CD4-positive, alpha-beta memory T cell (primary cell): ENCODE measurements at regions of chr5 and their contacts with region 1.

Region 1: DNA sequence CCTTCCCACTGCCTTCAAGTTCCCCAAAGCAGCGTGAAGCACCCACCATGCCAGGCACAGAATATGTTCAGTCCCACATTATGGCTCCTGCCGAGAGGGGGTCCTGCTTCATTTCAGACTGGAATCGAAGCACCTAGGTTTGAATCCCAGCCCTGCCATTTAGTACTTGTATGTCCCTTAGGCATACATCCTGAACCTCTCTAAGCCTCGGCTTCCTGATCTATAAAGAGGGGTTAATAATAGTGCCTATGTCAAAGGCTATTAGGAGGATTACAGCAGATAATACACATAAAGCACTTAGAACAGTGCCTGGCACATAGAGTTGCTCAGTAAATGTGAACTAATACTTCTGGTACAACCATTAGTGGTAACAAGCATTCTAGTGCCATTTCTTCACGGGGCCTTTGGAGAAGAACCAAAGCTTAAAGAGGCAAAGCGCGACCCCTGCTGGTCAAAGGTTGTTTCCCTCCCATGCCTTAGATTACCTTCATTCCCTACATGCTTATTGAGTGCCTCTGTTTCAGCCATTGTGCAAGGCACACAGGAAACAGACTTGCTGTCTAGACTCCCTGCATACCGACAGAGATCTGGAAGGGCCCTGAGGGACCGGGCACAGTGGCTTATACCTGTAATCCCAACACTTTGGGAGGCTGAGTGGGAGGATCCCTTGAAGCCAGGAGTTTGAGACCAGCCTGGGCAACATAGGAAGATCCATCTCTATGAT is 98.2 kb downstream of the PPARGC1B start:
- DNase-seq: peak; percentile 65 to 73 (median 67)
- H3K4me3 ChIP-seq: no peak overlapping the region
- H3K4me3 Mint-ChIP-seq: no peak overlapping the region
- H3K27ac ChIP-seq: no peak overlapping the region
- H3K27ac Mint-ChIP-seq: peak overlapping the region in 1 of 7 donors; percentile 54
- H3K4me1 ChIP-seq: no peaks in the 10 kb centered on the region
- H3K4me1 Mint-ChIP-seq: peaks cover 0 to 4% (median 2%) of the 10 kb centered on the region in 4 donors
- H3K27me3 ChIP-seq: no peaks in the 10 kb centered on the region
- H3K27me3 Mint-ChIP-seq: no peaks in the 10 kb centered on the region

Region 2: GRCh38 chr5:149636851-149637246 is 191.5 kb before region 1 on chr5:
- CTCF ChIA-PET with region 1: interaction called, 309 read pairs
- POLR2A ChIA-PET with region 1: interaction called, 4 read pairs
- intact Hi-C with region 1: loop called (anchors 1 kb)
- DNase-seq: peak; percentile 39 to 65 (median 52)
- H3K4me3 ChIP-seq: no peak overlapping the region
- H3K4me3 Mint-ChIP-seq: no peak overlapping the region
- H3K27ac ChIP-seq: no peak overlapping the region
- H3K27ac Mint-ChIP-seq: no peak overlapping the region
- H3K4me1 ChIP-seq: no peaks in the 10 kb centered on the region
- H3K4me1 Mint-ChIP-seq: peaks cover 0 to 4% (median 1%) of the 10 kb centered on the region in 4 donors
- H3K27me3 ChIP-seq: peaks cover 5% of the 10 kb centered on the region
- H3K27me3 Mint-ChIP-seq: peaks cover 0 to under 1% of the 10 kb centered on the region in 2 donors

Region 3: DNA sequence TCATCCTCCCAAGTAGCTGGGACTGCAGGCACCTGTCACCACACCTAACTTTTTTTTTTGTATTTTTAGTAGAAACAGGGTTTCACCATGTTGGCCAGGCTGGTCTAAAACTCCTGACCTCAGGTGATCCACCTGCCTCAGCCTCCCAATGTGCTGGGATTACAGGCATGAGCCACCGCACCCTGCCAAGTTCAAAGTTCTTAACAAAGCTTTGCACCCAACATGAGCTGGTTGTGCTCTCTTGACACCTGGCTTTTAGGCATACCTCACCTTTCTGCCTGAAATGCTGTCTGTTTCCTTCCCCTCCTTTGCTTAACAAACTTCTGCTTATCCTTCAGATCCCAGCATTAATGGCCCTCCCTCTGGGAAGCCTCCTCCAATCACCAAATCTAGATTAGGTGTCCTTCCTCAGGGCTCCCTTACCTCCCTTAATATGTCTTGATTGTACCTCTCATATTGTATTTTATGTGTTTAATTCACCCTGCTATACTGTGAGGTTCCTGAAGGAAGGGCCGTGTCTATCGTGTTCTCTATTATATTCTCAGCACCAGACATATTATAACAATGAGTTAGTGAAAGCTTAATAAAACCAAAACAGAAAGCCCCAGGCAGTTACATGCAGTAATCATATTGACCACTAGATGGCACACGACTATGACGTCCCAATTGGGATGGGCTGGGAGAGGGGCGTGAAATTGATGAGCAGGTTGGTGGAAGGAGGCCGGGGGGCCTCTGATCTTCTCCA is 161.1 kb before region 1 on chr5:
- CTCF ChIA-PET with region 1: interaction called, 103 read pairs
- POLR2A ChIA-PET with region 1: no interaction called
- intact Hi-C with region 1: loop called (anchors 1 kb)
- DNase-seq: peak in 1 of 5 donors; percentile 14
- H3K4me3 ChIP-seq: no peak overlapping the region
- H3K4me3 Mint-ChIP-seq: no peak overlapping the region
- H3K27ac ChIP-seq: no peak overlapping the region
- H3K27ac Mint-ChIP-seq: no peak overlapping the region
- H3K4me1 ChIP-seq: no peaks in the 10 kb centered on the region
- H3K4me1 Mint-ChIP-seq: no peaks in the 10 kb centered on the region
- H3K27me3 ChIP-seq: no peaks in the 10 kb centered on the region
- H3K27me3 Mint-ChIP-seq: peaks cover 0 to 2% of the 10 kb centered on the region in 2 donors

Region 4: GRCh38 chr5:149731639-149732323 is 96.5 kb before region 1 on chr5:
- CTCF ChIA-PET with region 1: interaction called, 3 read pairs
- POLR2A ChIA-PET with region 1: no interaction called
- intact Hi-C with region 1: loop called (anchors 2 kb)
- DNase-seq: peak; percentile 47 to 85 (median 61)
- H3K4me3 ChIP-seq: peak overlapping the region; percentile 39 to 76
- H3K4me3 Mint-ChIP-seq: peak overlapping the region; percentile 85 to 92 (median 88)
- H3K27ac ChIP-seq: no peak overlapping the region
- H3K27ac Mint-ChIP-seq: peak overlapping the region; percentile 19 to 82 (median 76)
- H3K4me1 ChIP-seq: no peaks in the 10 kb centered on the region
- H3K4me1 Mint-ChIP-seq: peaks cover 0 to 14% (median 1%) of the 10 kb centered on the region in 4 donors
- H3K27me3 ChIP-seq: no peaks in the 10 kb centered on the region
- H3K27me3 Mint-ChIP-seq: no peaks in the 10 kb centered on the region

Region 5: DNA sequence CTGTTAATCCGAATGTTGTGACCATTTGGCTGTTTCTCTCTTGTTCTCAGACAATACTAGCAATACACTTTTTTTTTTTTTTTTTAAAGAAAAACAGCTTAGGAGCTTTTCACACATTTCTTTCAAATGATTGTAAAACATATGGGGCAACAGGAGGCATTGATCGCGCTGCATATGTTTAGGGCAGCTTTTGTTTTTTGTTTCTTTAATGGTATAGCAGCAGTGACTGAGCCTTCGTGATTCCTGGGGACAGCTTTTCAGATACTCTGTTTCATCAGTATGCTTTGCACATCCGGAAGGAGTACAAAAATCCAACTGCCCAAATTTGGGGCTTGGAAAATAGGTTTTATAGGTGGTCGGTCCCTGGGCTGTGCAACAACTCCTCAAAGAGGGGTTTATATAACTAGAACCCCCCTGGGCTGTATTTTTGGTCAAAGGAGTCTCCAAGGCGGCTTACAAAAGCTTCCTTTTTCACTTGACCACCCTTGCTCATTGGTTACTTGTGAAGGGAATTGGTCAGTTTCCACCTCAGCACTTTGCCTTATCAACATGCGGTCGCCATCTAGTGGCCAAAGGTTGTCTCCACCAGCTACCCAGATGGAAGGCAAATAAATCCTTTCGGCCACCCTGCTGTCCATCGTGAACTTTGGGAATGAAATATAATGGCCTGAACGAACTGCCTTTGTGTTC is 24.5 kb after region 1 on chr5:
- CTCF ChIA-PET with region 1: interaction called, 35 read pairs
- POLR2A ChIA-PET with region 1: no interaction called
- intact Hi-C with region 1: no loop called
- DNase-seq: peak in 3 of 5 donors; percentile 10 to 19 (median 12)
- H3K4me3 ChIP-seq: no peak overlapping the region
- H3K4me3 Mint-ChIP-seq: no peak overlapping the region
- H3K27ac ChIP-seq: no peak overlapping the region
- H3K27ac Mint-ChIP-seq: no peak overlapping the region
- H3K4me1 ChIP-seq: no peaks in the 10 kb centered on the region
- H3K4me1 Mint-ChIP-seq: no peaks in the 10 kb centered on the region
- H3K27me3 ChIP-seq: no peaks in the 10 kb centered on the region
- H3K27me3 Mint-ChIP-seq: no peaks in the 10 kb centered on the region